K562 (cell line): ENCODE measurements at regions of chr1 and their contacts with region 1.

Region 1: GRCh38 chr1:117059678-117060440 is at the start of gene TTF2:
- DNase-seq: peak; percentile 98 to 100 (median 99)
- ATAC-seq: peak; percentile 95
- H3K4me3 ChIP-seq: peak within 1 kb of the TSS; percentile 76
- H3K27ac ChIP-seq: peak within 1 kb of the TSS; percentile 92
- H3K4me1 ChIP-seq: peaks cover 10 to 14% of the 10 kb centered on the region in 2 experiments
- H3K27me3 ChIP-seq: no peaks in the 10 kb centered on the region
- CTCF ChIP-seq: peak; percentile 34 to 46 (median 45); a peak in 4 of 6 replicates
- EP300 ChIP-seq: 0 out of 2 replicates have a peak, but pooled peaks have one; percentile 6
- POLR2A ChIP-seq: peak; percentile 96
- RAD21 ChIP-seq: no peak; a peak in 2 of 4 replicates
- polyA plus RNA-seq, gene TTF2: 9.4 to 10.5 TPM

Region 2: GRCh38 chr1:116151739-116152576 is 907.9 kb before region 1 on chr1:
- CTCF ChIA-PET with region 1: interaction called, 3 read pairs
- POLR2A ChIA-PET with region 1: no interaction called
- in situ Hi-C with region 1: no loop called
- intact Hi-C with region 1: loop called (anchors 10 kb)
- DNase-seq: peak; percentile 88 to 94 (median 93)
- ATAC-seq: peak; percentile 99
- H3K4me3 ChIP-seq: peak overlapping the region; percentile 45
- H3K27ac ChIP-seq: peak overlapping the region; percentile 51; the same call in 1 of the 3 replicates
- H3K4me1 ChIP-seq: peaks cover 4 to 7% of the 10 kb centered on the region in 2 experiments
- H3K27me3 ChIP-seq: peaks cover 7% of the 10 kb centered on the region in 2 experiments; a peak in 2 of 5 replicates
- CTCF ChIP-seq: peak; percentile 94 to 99 (median 97)
- EP300 ChIP-seq: no peak
- POLR2A ChIP-seq: no peak
- RAD21 ChIP-seq: peak; percentile 92 to 93

Region 3: GRCh38 chr1:116570358-116571200 is 489.3 kb before region 1 on chr1 and contains the start of gene CD58:
- CTCF ChIA-PET with region 1: interaction called, 8 read pairs
- POLR2A ChIA-PET with region 1: interaction called, 5 read pairs
- in situ Hi-C with region 1: no loop called
- intact Hi-C with region 1: loop called (anchors 1 kb)
- DNase-seq: peak; percentile 95 to 97 (median 95)
- ATAC-seq: peak; percentile 91
- H3K4me3 ChIP-seq: peak within 1 kb of the TSS; percentile 82
- H3K27ac ChIP-seq: peak within 1 kb of the TSS; percentile 88
- H3K4me1 ChIP-seq: peaks cover 45 to 54% of the 10 kb centered on the region in 2 experiments
- H3K27me3 ChIP-seq: no peaks in the 10 kb centered on the region
- CTCF ChIP-seq: peak; percentile 80 to 90 (median 83)
- EP300 ChIP-seq: no peak; the same call in 1 of the 2 replicates
- POLR2A ChIP-seq: peak; percentile 89
- RAD21 ChIP-seq: peak; percentile 52 to 59
- polyA plus RNA-seq, gene CD58: 24.6 to 33.0 TPM

Region 4: GRCh38 chr1:116853670-116854402 is 206.0 kb before region 1 on chr1:
- CTCF ChIA-PET with region 1: no interaction called
- POLR2A ChIA-PET with region 1: no interaction called
- in situ Hi-C with region 1: no loop called
- intact Hi-C with region 1: loop called (anchors 10 kb)
- DNase-seq: peak in 2 of 4 experiments; percentile 30 to 48
- ATAC-seq: peak; percentile 76
- H3K4me3 ChIP-seq: no peak overlapping the region
- H3K27ac ChIP-seq: no peak overlapping the region
- H3K4me1 ChIP-seq: peaks cover 0 to 13% of the 10 kb centered on the region in 2 experiments; a peak in 3 of 5 replicates
- H3K27me3 ChIP-seq: no peaks in the 10 kb centered on the region
- CTCF ChIP-seq: no peak
- EP300 ChIP-seq: no peak
- POLR2A ChIP-seq: no peak
- RAD21 ChIP-seq: no peak

Region 5: GRCh38 chr1:116934586-116935207 is 125.2 kb before region 1 on chr1:
- CTCF ChIA-PET with region 1: no interaction called
- POLR2A ChIA-PET with region 1: no interaction called
- in situ Hi-C with region 1: no loop called
- intact Hi-C with region 1: loop called (anchors 10 kb)
- DNase-seq: peak; percentile 41 to 60 (median 54)
- ATAC-seq: peak; percentile 81
- H3K4me3 ChIP-seq: no peak overlapping the region
- H3K27ac ChIP-seq: no peak overlapping the region
- H3K4me1 ChIP-seq: peaks cover 11 to 34% of the 10 kb centered on the region in 2 experiments
- H3K27me3 ChIP-seq: no peaks in the 10 kb centered on the region
- CTCF ChIP-seq: peak; percentile 23 to 68 (median 65); a peak in 5 of 6 replicates
- EP300 ChIP-seq: no peak
- POLR2A ChIP-seq: no peak
- RAD21 ChIP-seq: peak; percentile 29 to 58; a peak in 3 of 4 replicates

Region 6: GRCh38 chr1:117335356-117336086 is 275.7 kb after region 1 on chr1:
- CTCF ChIA-PET with region 1: no interaction called
- POLR2A ChIA-PET with region 1: no interaction called
- in situ Hi-C with region 1: no loop called
- intact Hi-C with region 1: no loop called
- DNase-seq: no peak
- ATAC-seq: no peak
- H3K4me3 ChIP-seq: no peak overlapping the region
- H3K27ac ChIP-seq: no peak overlapping the region
- H3K4me1 ChIP-seq: peaks cover 0 to 12% of the 10 kb centered on the region in 2 experiments; a peak in 3 of 5 replicates
- H3K27me3 ChIP-seq: no peaks in the 10 kb centered on the region
- CTCF ChIP-seq: no peak
- EP300 ChIP-seq: no peak
- POLR2A ChIP-seq: no peak
- RAD21 ChIP-seq: no peak

Region 7: GRCh38 chr1:117398957-117399356 is 339.1 kb after region 1 on chr1:
- CTCF ChIA-PET with region 1: no interaction called
- POLR2A ChIA-PET with region 1: no interaction called
- in situ Hi-C with region 1: no loop called
- intact Hi-C with region 1: no loop called
- DNase-seq: no peak
- ATAC-seq: peak; percentile 29; the same call in 2 of the 3 replicates
- H3K4me3 ChIP-seq: no peak overlapping the region
- H3K27ac ChIP-seq: no peak overlapping the region
- H3K4me1 ChIP-seq: peaks cover 0 to 13% of the 10 kb centered on the region in 2 experiments; a peak in 2 of 5 replicates
- H3K27me3 ChIP-seq: no peaks in the 10 kb centered on the region
- CTCF ChIP-seq: no peak
- EP300 ChIP-seq: no peak
- POLR2A ChIP-seq: no peak
- RAD21 ChIP-seq: no peak